ENCODE measurements at regions of chr2 and their contacts with region 1.

Region 1: DNA sequence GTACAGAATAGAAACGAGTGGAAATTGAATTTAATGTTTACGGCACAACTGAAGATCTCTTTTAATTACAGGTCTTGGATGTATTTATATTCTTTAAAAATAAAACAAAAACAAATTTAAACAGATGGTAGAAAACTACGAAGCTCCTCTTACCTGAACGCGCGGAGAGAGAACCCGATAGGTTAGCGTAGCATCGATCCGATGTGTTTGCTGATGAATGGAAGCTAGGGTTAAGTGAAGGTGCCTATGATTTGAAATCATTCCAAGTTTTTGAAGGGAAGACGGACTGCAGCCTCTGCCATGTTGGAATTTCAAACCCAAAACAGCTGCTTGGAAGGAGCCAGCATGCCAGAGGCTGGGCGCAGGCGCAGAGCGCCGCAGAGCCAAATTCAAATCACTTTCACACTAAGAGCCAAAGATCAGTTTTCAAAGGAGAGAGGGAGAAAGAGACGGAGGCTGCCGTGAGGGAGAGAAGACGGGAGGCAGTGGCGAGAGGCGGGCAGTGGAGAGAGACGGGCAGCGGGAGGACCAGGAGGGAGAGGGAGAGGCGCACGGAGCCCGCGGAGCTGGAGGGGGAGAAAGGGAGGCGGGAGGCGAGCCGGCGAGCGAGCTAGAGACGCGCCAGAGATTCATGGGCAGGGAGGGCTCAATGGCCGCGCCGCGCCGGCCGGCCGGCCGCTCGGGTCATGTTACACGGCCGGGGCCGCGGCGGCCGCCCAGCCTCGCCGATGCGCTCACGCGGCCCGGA is at the start of gene FIGN:
- DNase-seq: peak; percentile 89
- ATAC-seq: peak; percentile 90
- total RNA-seq, gene FIGN: 13.5 TPM

Region 2: GRCh38 chr2:163345908-163346573 is 389.8 kb before region 1 on chr2:
- intact Hi-C with region 1: loop called (anchors 5 kb)
- DNase-seq: no peak
- ATAC-seq: no peak

Region 3: GRCh38 chr2:163465440-163465839 is 270.4 kb before region 1 on chr2:
- intact Hi-C with region 1: loop called (anchors 10 kb)
- DNase-seq: no peak
- ATAC-seq: peak; percentile 87

Region 4: DNA sequence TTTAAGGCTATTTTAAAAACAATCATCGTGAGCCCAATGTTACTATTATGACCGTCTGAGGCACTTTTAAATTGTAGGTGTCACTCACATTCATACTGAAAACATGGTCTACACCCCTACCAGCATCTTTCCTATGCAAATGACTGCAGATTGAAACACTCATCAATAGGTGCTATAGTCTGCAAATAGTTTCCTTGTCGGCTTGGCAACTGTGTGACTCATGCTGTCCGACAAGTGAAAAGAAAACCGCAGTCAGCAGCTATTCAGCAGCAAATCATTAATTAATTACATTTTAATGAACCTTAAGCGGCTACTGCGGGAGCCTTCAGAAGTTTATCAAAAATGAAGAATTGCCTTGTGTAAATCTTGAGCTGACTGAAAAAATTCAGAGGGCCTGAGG is 134.5 kb before region 1 on chr2:
- intact Hi-C with region 1: loop called (anchors 10 kb)
- DNase-seq: no peak
- ATAC-seq: no peak

Region 5: GRCh38 chr2:163667064-163667887 is 68.6 kb before region 1 on chr2:
- intact Hi-C with region 1: no loop called
- DNase-seq: no peak
- ATAC-seq: peak; percentile 91

Region 6: DNA sequence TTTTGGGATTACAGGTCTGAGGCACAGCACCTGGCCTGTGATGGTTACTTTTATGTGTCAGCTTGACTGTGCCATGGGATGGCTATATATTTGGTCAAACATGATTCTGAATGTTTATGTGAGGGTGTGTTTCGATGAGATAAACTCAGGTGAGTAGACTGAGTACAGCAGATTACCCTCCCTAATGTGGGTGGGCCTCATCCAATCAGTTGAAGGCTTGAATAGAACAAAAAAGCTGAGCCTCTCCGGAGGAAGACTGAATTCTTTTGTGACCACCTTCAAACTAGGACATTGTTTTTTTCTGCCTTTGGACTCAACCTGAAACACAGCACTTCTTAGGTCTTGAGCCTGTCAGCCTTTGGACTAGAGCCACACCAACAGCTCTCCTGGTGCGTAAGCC is 49.3 kb after region 1 on chr2:
- intact Hi-C with region 1: no loop called
- DNase-seq: no peak
- ATAC-seq: no peak

Region 7: GRCh38 chr2:164151518-164151917 is 415.7 kb after region 1 on chr2:
- intact Hi-C with region 1: no loop called
- DNase-seq: no peak
- ATAC-seq: no peak

Region 8: GRCh38 chr2:164302786-164303185 is 566.9 kb after region 1 on chr2:
- intact Hi-C with region 1: no loop called
- DNase-seq: no peak
- ATAC-seq: no peak